CD4-positive, alpha-beta memory T cell (primary cell): ENCODE measurements at regions of chr12 and their contacts with region 1.

Region 1: GRCh38 chr12:95998611-95999286 is 2.6 kb upstream of the HAL start:
- DNase-seq: peak; percentile 48 to 67 (median 59)
- H3K4me3 ChIP-seq: no peak overlapping the region
- H3K4me3 Mint-ChIP-seq: no peak overlapping the region
- H3K27ac ChIP-seq: no peak overlapping the region
- H3K27ac Mint-ChIP-seq: peak overlapping the region in 1 of 7 donors; percentile 70
- H3K4me1 ChIP-seq: no peaks in the 10 kb centered on the region
- H3K4me1 Mint-ChIP-seq: peaks cover 3 to 6% (median 5%) of the 10 kb centered on the region in 4 donors
- H3K27me3 ChIP-seq: no peaks in the 10 kb centered on the region
- H3K27me3 Mint-ChIP-seq: no peaks in the 10 kb centered on the region

Region 2: GRCh38 chr12:95117178-95117599 is 881.6 kb before region 1 on chr12:
- CTCF ChIA-PET with region 1: no interaction called
- POLR2A ChIA-PET with region 1: no interaction called
- intact Hi-C with region 1: loop called (anchors 5 kb)
- DNase-seq: peak; percentile 63 to 72 (median 66)
- H3K4me3 ChIP-seq: no peak overlapping the region
- H3K4me3 Mint-ChIP-seq: no peak overlapping the region
- H3K27ac ChIP-seq: no peak overlapping the region
- H3K27ac Mint-ChIP-seq: no peak overlapping the region
- H3K4me1 ChIP-seq: no peaks in the 10 kb centered on the region
- H3K4me1 Mint-ChIP-seq: no peaks in the 10 kb centered on the region
- H3K27me3 ChIP-seq: no peaks in the 10 kb centered on the region
- H3K27me3 Mint-ChIP-seq: no peaks in the 10 kb centered on the region

Region 3: GRCh38 chr12:95820102-95820703 is 178.5 kb before region 1 on chr12:
- CTCF ChIA-PET with region 1: no interaction called
- POLR2A ChIA-PET with region 1: no interaction called
- intact Hi-C with region 1: loop called (anchors 1 kb)
- DNase-seq: no peak
- H3K4me3 ChIP-seq: no peak overlapping the region
- H3K4me3 Mint-ChIP-seq: no peak overlapping the region
- H3K27ac ChIP-seq: no peak overlapping the region
- H3K27ac Mint-ChIP-seq: no peak overlapping the region
- H3K4me1 ChIP-seq: no peaks in the 10 kb centered on the region
- H3K4me1 Mint-ChIP-seq: no peaks in the 10 kb centered on the region
- H3K27me3 ChIP-seq: no peaks in the 10 kb centered on the region
- H3K27me3 Mint-ChIP-seq: peaks cover 10 to 21% of the 10 kb centered on the region in 2 donors

Region 4: GRCh38 chr12:95909871-95910270 is 88.9 kb before region 1 on chr12:
- CTCF ChIA-PET with region 1: interaction called, 196 read pairs
- POLR2A ChIA-PET with region 1: no interaction called
- intact Hi-C with region 1: no loop called
- DNase-seq: no peak
- H3K4me3 ChIP-seq: no peak overlapping the region
- H3K4me3 Mint-ChIP-seq: no peak overlapping the region
- H3K27ac ChIP-seq: no peak overlapping the region
- H3K27ac Mint-ChIP-seq: no peak overlapping the region
- H3K4me1 ChIP-seq: no peaks in the 10 kb centered on the region
- H3K4me1 Mint-ChIP-seq: no peaks in the 10 kb centered on the region
- H3K27me3 ChIP-seq: no peaks in the 10 kb centered on the region
- H3K27me3 Mint-ChIP-seq: peaks cover 12 to 15% of the 10 kb centered on the region in 2 donors

Region 5: GRCh38 chr12:95918194-95918993 is 80.4 kb before region 1 on chr12:
- CTCF ChIA-PET with region 1: interaction called, 196 read pairs
- POLR2A ChIA-PET with region 1: interaction called, 6 read pairs
- intact Hi-C with region 1: no loop called
- DNase-seq: peak; percentile 44 to 61 (median 57)
- H3K4me3 ChIP-seq: no peak overlapping the region
- H3K4me3 Mint-ChIP-seq: no peak overlapping the region
- H3K27ac ChIP-seq: no peak overlapping the region
- H3K27ac Mint-ChIP-seq: no peak overlapping the region
- H3K4me1 ChIP-seq: no peaks in the 10 kb centered on the region
- H3K4me1 Mint-ChIP-seq: no peaks in the 10 kb centered on the region
- H3K27me3 ChIP-seq: no peaks in the 10 kb centered on the region
- H3K27me3 Mint-ChIP-seq: no peaks in the 10 kb centered on the region

Region 6: DNA sequence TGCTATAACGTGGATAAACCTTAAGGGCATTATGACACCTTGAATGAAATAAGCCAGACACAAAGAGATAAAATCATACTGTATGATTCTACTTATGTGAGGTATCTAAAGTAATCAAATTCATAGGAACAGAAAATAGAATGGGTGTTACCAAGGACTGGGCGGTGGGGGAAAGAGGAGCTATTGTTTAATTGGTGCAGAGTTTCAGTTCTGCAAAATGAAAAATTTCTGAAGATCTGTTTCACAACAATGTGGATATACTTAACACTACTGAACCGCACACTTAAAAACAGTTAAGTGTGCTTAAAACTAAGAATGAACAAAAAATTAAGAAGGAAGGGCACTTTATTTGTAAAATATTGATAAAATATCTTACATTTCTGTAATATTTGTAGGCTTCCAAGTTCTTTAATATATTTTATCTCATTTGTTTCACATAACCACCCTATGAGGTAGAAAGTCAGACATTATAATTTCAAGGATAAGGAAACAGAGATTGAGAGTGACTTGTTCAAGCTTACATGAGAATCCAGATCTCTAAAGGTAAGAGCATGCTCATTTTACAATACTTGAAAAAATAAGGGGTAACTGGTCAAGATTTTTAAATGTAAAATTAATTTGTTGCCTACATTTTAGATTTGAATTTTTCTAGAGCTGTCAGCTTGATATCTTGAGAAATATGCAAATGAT is 21.7 kb after region 1 on chr12:
- CTCF ChIA-PET with region 1: interaction called, 13 read pairs
- POLR2A ChIA-PET with region 1: no interaction called
- intact Hi-C with region 1: no loop called
- DNase-seq: no peak
- H3K4me3 ChIP-seq: no peak overlapping the region
- H3K4me3 Mint-ChIP-seq: no peak overlapping the region
- H3K27ac ChIP-seq: no peak overlapping the region
- H3K27ac Mint-ChIP-seq: peak overlapping the region in 1 of 7 donors; percentile 19
- H3K4me1 ChIP-seq: no peaks in the 10 kb centered on the region
- H3K4me1 Mint-ChIP-seq: no peaks in the 10 kb centered on the region
- H3K27me3 ChIP-seq: no peaks in the 10 kb centered on the region
- H3K27me3 Mint-ChIP-seq: no peaks in the 10 kb centered on the region

Region 7: GRCh38 chr12:96132819-96133218 is 134.1 kb after region 1 on chr12:
- CTCF ChIA-PET with region 1: no interaction called
- POLR2A ChIA-PET with region 1: no interaction called
- intact Hi-C with region 1: no loop called
- DNase-seq: peak in 2 of 5 donors; percentile 5 to 19
- H3K4me3 ChIP-seq: no peak overlapping the region
- H3K4me3 Mint-ChIP-seq: no peak overlapping the region
- H3K27ac ChIP-seq: no peak overlapping the region
- H3K27ac Mint-ChIP-seq: no peak overlapping the region
- H3K4me1 ChIP-seq: peaks cover 17% of the 10 kb centered on the region
- H3K4me1 Mint-ChIP-seq: peaks cover 12 to 20% (median 15%) of the 10 kb centered on the region in 4 donors
- H3K27me3 ChIP-seq: no peaks in the 10 kb centered on the region
- H3K27me3 Mint-ChIP-seq: peaks cover 6 to 11% of the 10 kb centered on the region in 2 donors